Caco-2 (cell line): ENCODE measurements at regions of chr6 and their contacts with region 1.

Region 1: DNA sequence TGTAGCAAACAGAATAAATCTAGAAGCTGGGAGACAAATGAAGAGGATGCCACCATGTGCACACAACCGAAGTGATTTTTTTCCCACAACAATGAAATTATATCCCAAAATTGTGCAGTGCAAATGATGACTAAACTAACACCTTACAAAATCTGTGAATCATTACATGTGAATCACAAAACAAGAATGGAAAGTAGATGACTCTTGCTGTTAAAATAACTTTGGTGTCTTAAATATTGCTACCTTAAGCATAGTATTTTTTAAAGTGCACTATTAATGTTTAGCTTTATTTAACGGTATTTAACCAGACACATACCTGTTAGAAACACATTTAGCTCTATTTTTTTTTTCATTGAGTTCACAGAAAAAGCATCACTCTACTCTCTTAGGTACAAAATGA is 190.8 kb downstream of the TBC1D32 start:
- DNase-seq: no peak
- H3K4me3 ChIP-seq: no peak overlapping the region
- H3K4me3 Mint-ChIP-seq: no peak overlapping the region
- H3K27ac Mint-ChIP-seq: no peak overlapping the region
- H3K4me1 ChIP-seq: no peaks in the 10 kb centered on the region
- H3K4me1 Mint-ChIP-seq: no peaks in the 10 kb centered on the region
- H3K27me3 ChIP-seq: no peaks in the 10 kb centered on the region
- H3K27me3 Mint-ChIP-seq: no peaks in the 10 kb centered on the region
- CTCF ChIP-seq: no peak

Region 2: GRCh38 chr6:121157906-121158305 is 14.4 kb after region 1 on chr6:
- CTCF ChIA-PET with region 1: no interaction called
- POLR2A ChIA-PET with region 1: no interaction called
- intact Hi-C with region 1: no loop called
- DNase-seq: no peak
- H3K4me3 ChIP-seq: no peak overlapping the region
- H3K4me3 Mint-ChIP-seq: no peak overlapping the region
- H3K27ac Mint-ChIP-seq: no peak overlapping the region
- H3K4me1 ChIP-seq: no peaks in the 10 kb centered on the region
- H3K4me1 Mint-ChIP-seq: no peaks in the 10 kb centered on the region
- H3K27me3 ChIP-seq: no peaks in the 10 kb centered on the region
- H3K27me3 Mint-ChIP-seq: no peaks in the 10 kb centered on the region
- CTCF ChIP-seq: no peak

Region 3: GRCh38 chr6:121183742-121184141 is 40.3 kb after region 1 on chr6:
- CTCF ChIA-PET with region 1: no interaction called
- POLR2A ChIA-PET with region 1: no interaction called
- intact Hi-C with region 1: no loop called
- DNase-seq: no peak
- H3K4me3 ChIP-seq: no peak overlapping the region
- H3K4me3 Mint-ChIP-seq: no peak overlapping the region
- H3K27ac Mint-ChIP-seq: no peak overlapping the region
- H3K4me1 ChIP-seq: no peaks in the 10 kb centered on the region
- H3K4me1 Mint-ChIP-seq: no peaks in the 10 kb centered on the region
- H3K27me3 ChIP-seq: no peaks in the 10 kb centered on the region
- H3K27me3 Mint-ChIP-seq: no peaks in the 10 kb centered on the region
- CTCF ChIP-seq: no peak

Region 4: GRCh38 chr6:121201105-121201504 is 57.6 kb after region 1 on chr6:
- CTCF ChIA-PET with region 1: no interaction called
- POLR2A ChIA-PET with region 1: no interaction called
- intact Hi-C with region 1: no loop called
- DNase-seq: no peak
- H3K4me3 ChIP-seq: no peak overlapping the region
- H3K4me3 Mint-ChIP-seq: no peak overlapping the region
- H3K27ac Mint-ChIP-seq: no peak overlapping the region
- H3K4me1 ChIP-seq: no peaks in the 10 kb centered on the region
- H3K4me1 Mint-ChIP-seq: no peaks in the 10 kb centered on the region
- H3K27me3 ChIP-seq: no peaks in the 10 kb centered on the region
- H3K27me3 Mint-ChIP-seq: no peaks in the 10 kb centered on the region
- CTCF ChIP-seq: no peak

Region 5: DNA sequence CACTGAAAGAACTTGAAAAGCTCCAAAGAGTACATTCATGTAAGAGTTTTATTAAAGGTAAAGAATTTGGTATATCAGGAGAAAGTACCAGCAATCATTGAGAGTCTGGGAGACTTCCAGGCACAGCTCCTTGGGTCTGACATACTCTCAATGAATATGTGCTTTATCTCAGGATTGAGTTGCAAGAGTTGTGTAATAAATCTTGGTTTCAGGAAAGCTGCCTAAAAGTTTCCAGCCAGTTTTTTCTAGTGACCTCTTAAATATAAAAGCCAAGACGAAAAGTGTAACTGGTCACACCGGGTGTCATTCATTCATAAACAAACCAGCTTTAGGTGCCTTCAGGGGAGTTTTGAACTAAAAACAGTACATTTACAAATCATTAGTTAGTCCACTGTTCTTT is 270.4 kb after region 1 on chr6:
- CTCF ChIA-PET with region 1: no interaction called
- POLR2A ChIA-PET with region 1: no interaction called
- intact Hi-C with region 1: no loop called
- DNase-seq: no peak
- H3K4me3 ChIP-seq: no peak overlapping the region
- H3K4me3 Mint-ChIP-seq: no peak overlapping the region
- H3K27ac Mint-ChIP-seq: no peak overlapping the region
- H3K4me1 ChIP-seq: no peaks in the 10 kb centered on the region
- H3K4me1 Mint-ChIP-seq: no peaks in the 10 kb centered on the region
- H3K27me3 ChIP-seq: no peaks in the 10 kb centered on the region
- H3K27me3 Mint-ChIP-seq: no peaks in the 10 kb centered on the region
- CTCF ChIP-seq: no peak

Region 6: DNA sequence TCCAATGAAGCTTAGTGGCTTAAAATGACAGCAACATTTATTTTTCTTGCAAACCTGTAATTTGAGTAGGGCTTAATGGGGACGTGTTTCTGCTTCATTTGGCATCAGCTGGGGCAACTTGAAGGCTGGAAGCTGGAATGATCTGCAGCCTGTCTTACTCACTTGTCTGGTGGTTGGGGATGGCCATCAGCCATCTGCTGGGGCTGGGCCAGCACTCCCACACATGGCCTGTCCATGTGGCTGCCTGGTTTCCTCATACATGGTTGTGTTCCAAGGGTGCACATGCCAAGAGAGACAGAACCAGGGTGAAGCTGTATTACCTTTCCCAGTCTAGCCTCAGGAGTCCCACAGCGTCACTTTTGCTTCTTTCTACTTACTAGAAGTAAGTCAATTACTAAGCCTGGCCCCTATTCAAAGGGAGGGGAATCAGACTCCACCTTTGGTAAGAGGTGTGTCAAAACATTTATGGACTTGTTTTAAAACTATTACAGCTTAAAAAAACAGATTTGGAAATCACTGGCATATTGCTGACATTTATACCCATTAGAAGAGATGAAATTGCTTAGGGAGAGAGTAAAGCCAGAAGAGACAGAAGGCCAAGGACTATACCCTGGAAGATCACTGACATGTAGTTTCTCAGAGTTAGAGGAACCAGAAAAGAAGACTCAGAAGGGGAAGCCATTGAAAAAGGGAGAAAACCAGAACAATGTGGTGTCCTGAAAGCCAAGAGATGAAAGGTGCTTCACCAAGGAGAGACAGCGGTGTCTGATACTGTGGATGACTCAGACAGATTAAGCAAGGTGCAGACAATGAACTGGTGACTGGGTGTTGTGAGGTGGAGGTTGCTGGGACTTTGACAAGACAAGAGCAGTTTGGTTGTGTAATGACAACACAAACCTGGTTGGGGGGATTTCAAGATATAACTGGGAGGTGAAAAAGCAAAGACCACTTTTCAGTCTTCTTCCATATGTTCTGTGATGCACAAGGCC is 637.1 kb after region 1 on chr6:
- CTCF ChIA-PET with region 1: no interaction called
- POLR2A ChIA-PET with region 1: no interaction called
- intact Hi-C with region 1: loop called (anchors 10 kb)
- DNase-seq: no peak
- H3K4me3 ChIP-seq: no peak overlapping the region
- H3K4me3 Mint-ChIP-seq: no peak overlapping the region
- H3K27ac Mint-ChIP-seq: no peak overlapping the region
- H3K4me1 ChIP-seq: no peaks in the 10 kb centered on the region
- H3K4me1 Mint-ChIP-seq: no peaks in the 10 kb centered on the region
- H3K27me3 ChIP-seq: no peaks in the 10 kb centered on the region
- H3K27me3 Mint-ChIP-seq: no peaks in the 10 kb centered on the region
- CTCF ChIP-seq: no peak